GM12878 (cell line): ENCODE measurements at regions of chr22 and their contacts with region 1.

Region 1: DNA sequence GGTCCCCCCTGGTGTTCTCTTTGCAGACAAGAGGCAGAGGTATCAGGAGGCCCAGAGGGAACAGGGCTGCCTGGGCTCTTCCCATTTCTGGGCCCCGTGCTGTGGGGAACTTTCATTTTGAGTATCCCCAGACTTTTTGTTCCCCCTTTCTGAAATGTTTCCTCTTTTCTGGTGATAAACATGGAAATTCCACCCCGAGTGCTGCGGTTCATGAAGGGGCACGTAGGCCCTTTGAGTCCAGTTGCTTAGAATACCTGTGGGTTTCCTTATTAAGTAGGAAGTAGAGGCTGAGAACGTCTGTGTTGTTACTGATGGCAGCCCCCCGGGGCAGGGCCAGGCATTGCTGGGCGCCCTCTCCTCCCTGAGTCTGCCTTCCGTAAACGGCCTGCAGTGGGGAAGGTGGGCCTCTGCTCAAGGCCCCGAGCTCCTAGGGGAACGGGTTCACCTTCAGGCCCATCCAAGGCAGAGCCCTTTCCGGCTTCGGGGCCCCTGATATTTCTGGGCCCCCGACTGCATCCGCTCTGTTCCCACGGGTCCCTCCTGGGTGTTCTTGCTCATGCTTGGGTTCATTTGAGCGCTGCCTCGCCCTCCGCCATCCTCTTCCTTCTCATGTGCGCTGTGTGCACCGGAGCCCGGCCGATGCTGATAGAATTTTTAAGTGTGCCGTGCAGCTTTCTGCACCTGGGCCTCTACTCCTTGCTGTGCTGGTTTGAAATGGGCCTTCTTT is 12.0 kb downstream of the TBC1D22A start:
- DNase-seq: no peak
- ATAC-seq: peak; percentile 62
- H3K4me3 ChIP-seq: peak overlapping the region; percentile 73
- H3K27ac ChIP-seq: peak overlapping the region; percentile 94
- H3K4me1 ChIP-seq: peaks cover 63% of the 10 kb centered on the region
- H3K27me3 ChIP-seq: no peaks in the 10 kb centered on the region
- CTCF ChIP-seq: no peak; a peak in 1 of 6 replicates
- EP300 ChIP-seq: peak in 1 of 2 experiments; percentile 69; a peak in 1 of 4 replicates
- POLR2A ChIP-seq: no peak; the same call in none of the 2 replicates
- RAD21 ChIP-seq: no peak

Region 2: GRCh38 chr22:46393873-46394272 is 380.5 kb before region 1 on chr22:
- CTCF ChIA-PET with region 1: no interaction called
- POLR2A ChIA-PET with region 1: interaction called, 11 read pairs
- RAD21 ChIA-PET with region 1: no interaction called
- SMC1A ChIA-PET with region 1: no interaction called
- in situ Hi-C with region 1: no loop called
- intact Hi-C with region 1: no loop called
- DNase-seq: no peak
- ATAC-seq: no peak
- H3K4me3 ChIP-seq: no peak overlapping the region
- H3K27ac ChIP-seq: no peak overlapping the region
- H3K4me1 ChIP-seq: no peaks in the 10 kb centered on the region
- H3K27me3 ChIP-seq: no peaks in the 10 kb centered on the region; a peak in 1 of 4 replicates
- CTCF ChIP-seq: no peak
- EP300 ChIP-seq: no peak
- POLR2A ChIP-seq: no peak
- RAD21 ChIP-seq: no peak

Region 3: GRCh38 chr22:46829941-46830715 is 55.7 kb after region 1 on chr22:
- CTCF ChIA-PET with region 1: no interaction called
- POLR2A ChIA-PET with region 1: no interaction called
- RAD21 ChIA-PET with region 1: no interaction called
- SMC1A ChIA-PET with region 1: no interaction called
- in situ Hi-C with region 1: no loop called
- intact Hi-C with region 1: no loop called
- DNase-seq: no peak
- ATAC-seq: no peak
- H3K4me3 ChIP-seq: no peak overlapping the region
- H3K27ac ChIP-seq: no peak overlapping the region
- H3K4me1 ChIP-seq: no peaks in the 10 kb centered on the region
- H3K27me3 ChIP-seq: no peaks in the 10 kb centered on the region
- CTCF ChIP-seq: no peak
- EP300 ChIP-seq: no peak
- POLR2A ChIP-seq: no peak
- RAD21 ChIP-seq: no peak